ENCODE measurements at regions of chr21 and their contacts with region 1.

Region 1: DNA sequence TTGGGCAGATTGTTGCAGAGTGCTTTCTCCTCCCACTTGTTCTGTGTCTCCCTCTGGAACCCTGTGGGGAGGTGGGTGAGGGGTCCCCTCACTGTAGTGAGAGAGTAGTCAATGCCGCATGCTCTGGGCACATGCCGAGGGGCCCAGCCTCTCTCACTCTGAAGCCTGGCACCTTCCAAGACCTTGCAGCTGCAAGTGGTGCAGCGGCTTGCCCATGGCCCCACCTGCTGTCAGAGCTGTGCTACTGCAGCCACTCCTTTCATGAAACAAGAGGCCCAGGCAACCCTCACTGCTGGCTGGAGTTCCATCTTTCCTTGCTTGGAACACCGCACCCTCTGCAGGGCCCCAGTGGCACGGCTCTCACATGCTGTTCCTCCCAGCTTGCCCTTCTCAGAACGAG is 58.4 kb upstream of the COL6A1 start:
- DNase-seq: peak; percentile 34 to 84 (median 75)
- ATAC-seq: peak; percentile 90
- H3K4me3 ChIP-seq: no peak overlapping the region
- H3K4me3 Mint-ChIP-seq: peak overlapping the region in 2 of 10 donors; percentile 44 to 51
- H3K27ac ChIP-seq: no peak overlapping the region
- H3K27ac Mint-ChIP-seq: no peak overlapping the region
- H3K4me1 ChIP-seq: peaks cover 0 to 14% of the 10 kb centered on the region in 2 donors
- H3K4me1 Mint-ChIP-seq: peaks cover 0 to 22% (median 17%) of the 10 kb centered on the region in 7 donors
- H3K27me3 ChIP-seq: no peaks in the 10 kb centered on the region
- H3K27me3 Mint-ChIP-seq: no peaks in the 10 kb centered on the region

Region 2: GRCh38 chr21:45865106-45865832 is 57.9 kb before region 1 on chr21:
- CTCF ChIA-PET with region 1: no interaction called
- POLR2A ChIA-PET with region 1: no interaction called
- intact Hi-C with region 1: no loop called
- DNase-seq: no peak
- ATAC-seq: no peak
- H3K4me3 ChIP-seq: no peak overlapping the region
- H3K4me3 Mint-ChIP-seq: no peak overlapping the region
- H3K27ac ChIP-seq: no peak overlapping the region
- H3K27ac Mint-ChIP-seq: no peak overlapping the region
- H3K4me1 ChIP-seq: peaks cover 0 to 4% of the 10 kb centered on the region in 2 donors
- H3K4me1 Mint-ChIP-seq: peaks cover 0 to 10% (median 2%) of the 10 kb centered on the region in 7 donors
- H3K27me3 ChIP-seq: no peaks in the 10 kb centered on the region
- H3K27me3 Mint-ChIP-seq: no peaks in the 10 kb centered on the region

Region 3: DNA sequence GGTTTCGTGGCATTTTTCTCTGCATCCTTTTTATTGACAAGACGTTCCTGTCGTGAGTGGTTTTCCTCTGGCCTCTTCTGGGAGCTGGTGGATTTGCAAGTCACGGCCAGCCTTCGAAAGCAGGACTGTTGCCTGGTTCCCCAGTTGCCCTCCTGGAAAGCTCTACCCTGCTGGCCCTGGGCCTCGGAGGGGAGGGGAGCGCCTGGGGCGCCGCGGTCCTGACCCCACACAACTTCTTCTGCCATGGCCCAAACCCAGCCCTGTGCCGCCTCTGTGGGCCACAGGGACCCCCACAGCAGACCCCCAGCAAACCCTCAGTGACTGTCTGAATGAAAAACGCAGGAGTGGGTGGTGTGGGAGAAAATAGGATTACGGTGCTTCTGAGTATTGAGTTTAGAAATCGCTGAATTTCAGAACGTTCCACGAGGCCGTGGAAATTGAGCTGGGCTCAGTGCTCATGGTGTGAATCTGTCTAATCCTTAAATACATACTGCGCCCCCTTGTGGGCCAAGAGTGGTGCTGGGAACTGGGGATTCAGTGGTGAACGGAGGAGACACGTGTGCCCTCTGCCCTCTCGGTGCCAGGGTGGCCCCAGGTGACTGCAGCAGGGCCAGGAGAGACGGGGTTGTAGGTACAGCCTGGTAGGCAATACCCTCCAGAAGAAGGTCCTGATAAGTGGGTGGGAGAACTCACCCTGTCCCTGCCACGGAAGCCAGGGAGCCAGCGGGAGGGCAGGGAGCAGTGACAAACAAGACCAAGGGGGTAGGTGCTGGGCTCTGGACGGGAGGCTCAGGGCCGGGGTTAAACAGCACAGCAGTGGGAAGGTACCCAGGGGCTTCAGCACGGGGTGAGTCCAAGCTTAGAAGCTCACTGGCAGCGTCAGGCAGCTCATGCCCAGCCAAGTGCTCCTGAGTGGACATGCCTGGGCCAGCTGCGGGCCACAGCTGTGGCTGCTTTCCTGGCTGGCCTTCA is 42.8 kb before region 1 on chr21:
- CTCF ChIA-PET with region 1: interaction called, 18 read pairs
- POLR2A ChIA-PET with region 1: no interaction called
- intact Hi-C with region 1: loop called in 1 of 2 experiments (anchors 1 kb)
- DNase-seq: peak; percentile 42 to 76 (median 62)
- ATAC-seq: peak; percentile 90
- H3K4me3 ChIP-seq: no peak overlapping the region
- H3K4me3 Mint-ChIP-seq: peak overlapping the region in 8 of 10 donors; percentile 34 to 69 (median 55)
- H3K27ac ChIP-seq: no peak overlapping the region
- H3K27ac Mint-ChIP-seq: peak overlapping the region; percentile 22 to 84 (median 73)
- H3K4me1 ChIP-seq: peaks cover 8 to 23% of the 10 kb centered on the region in 2 donors
- H3K4me1 Mint-ChIP-seq: peaks cover 16 to 68% (median 61%) of the 10 kb centered on the region in 7 donors
- H3K27me3 ChIP-seq: no peaks in the 10 kb centered on the region
- H3K27me3 Mint-ChIP-seq: peaks cover 0 to 4% (median 0%) of the 10 kb centered on the region in 5 donors

Region 4: GRCh38 chr21:45887120-45887611 is 36.0 kb before region 1 on chr21:
- CTCF ChIA-PET with region 1: interaction called, 18 read pairs
- POLR2A ChIA-PET with region 1: interaction called, 3 read pairs
- intact Hi-C with region 1: loop called in 1 of 2 experiments (anchors 1 kb)
- DNase-seq: no peak
- ATAC-seq: no peak
- H3K4me3 ChIP-seq: peak overlapping the region; percentile 11
- H3K4me3 Mint-ChIP-seq: peak overlapping the region in 9 of 10 donors; percentile 24 to 81 (median 63)
- H3K27ac ChIP-seq: no peak overlapping the region
- H3K27ac Mint-ChIP-seq: peak overlapping the region; percentile 35 to 93 (median 89)
- H3K4me1 ChIP-seq: peaks cover 46 to 72% of the 10 kb centered on the region in 2 donors
- H3K4me1 Mint-ChIP-seq: peaks cover 48 to 97% (median 91%) of the 10 kb centered on the region in 7 donors
- H3K27me3 ChIP-seq: no peaks in the 10 kb centered on the region
- H3K27me3 Mint-ChIP-seq: peaks cover 0 to 15% (median 0%) of the 10 kb centered on the region in 5 donors

Region 5: GRCh38 chr21:45892156-45892902 is 30.8 kb before region 1 on chr21:
- CTCF ChIA-PET with region 1: interaction called, 18 read pairs
- POLR2A ChIA-PET with region 1: interaction called, 3 read pairs
- intact Hi-C with region 1: loop called in 1 of 2 experiments (anchors 2 kb)
- DNase-seq: peak in 4 of 9 donors; percentile 18 to 40 (median 26)
- ATAC-seq: peak; percentile 81
- H3K4me3 ChIP-seq: no peak overlapping the region
- H3K4me3 Mint-ChIP-seq: peak overlapping the region; percentile 13 to 81 (median 74)
- H3K27ac ChIP-seq: no peak overlapping the region
- H3K27ac Mint-ChIP-seq: peak overlapping the region; percentile 3 to 89 (median 78)
- H3K4me1 ChIP-seq: peaks cover 26 to 57% of the 10 kb centered on the region in 2 donors
- H3K4me1 Mint-ChIP-seq: peaks cover 30 to 67% (median 66%) of the 10 kb centered on the region in 7 donors
- H3K27me3 ChIP-seq: no peaks in the 10 kb centered on the region
- H3K27me3 Mint-ChIP-seq: peaks cover 0 to 17% (median 0%) of the 10 kb centered on the region in 5 donors

Measured in naive thymus-derived CD4-positive, alpha-beta T cell (primary cell).